Activated naive CD4-positive, alpha-beta T cell treated with anti-CD3 and anti-CD28 coated beads for 36 hours (primary cell): ENCODE measurements at regions of chr18 and their contacts with region 1.

Region 1: DNA sequence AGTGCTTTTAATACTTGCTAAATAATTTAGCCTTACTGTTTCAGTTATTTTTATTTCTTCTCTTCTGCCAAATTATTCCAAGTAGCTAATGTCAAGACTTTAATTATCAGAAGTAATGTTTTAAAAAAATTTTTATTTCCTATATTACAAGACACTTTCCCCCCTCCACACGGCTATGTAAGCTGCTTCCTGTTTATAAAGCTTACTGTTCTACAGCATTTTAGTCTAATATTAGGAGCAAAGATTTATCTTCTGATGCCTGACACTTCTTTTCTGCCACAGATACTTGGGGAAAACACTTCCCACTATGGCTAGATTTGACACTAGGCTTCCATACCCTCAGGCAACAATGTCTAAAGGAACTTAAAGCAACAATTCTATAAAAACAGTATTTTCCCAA is 62.3 kb downstream of the ROCK1 start:
- DNase-seq: no peak
- H3K4me3 Mint-ChIP-seq: no peak overlapping the region
- H3K27ac Mint-ChIP-seq: no peak overlapping the region
- H3K4me1 Mint-ChIP-seq: peaks cover 40% of the 10 kb centered on the region
- H3K27me3 Mint-ChIP-seq: no peaks in the 10 kb centered on the region

Region 2: GRCh38 chr18:21085579-21086166 is 36.4 kb after region 1 on chr18:
- CTCF ChIA-PET with region 1: no interaction called
- intact Hi-C with region 1: loop called (anchors 5 kb)
- DNase-seq: no peak
- H3K4me3 Mint-ChIP-seq: no peak overlapping the region
- H3K27ac Mint-ChIP-seq: no peak overlapping the region
- H3K4me1 Mint-ChIP-seq: peaks cover 65% of the 10 kb centered on the region
- H3K27me3 Mint-ChIP-seq: no peaks in the 10 kb centered on the region

Region 3: GRCh38 chr18:21315741-21316187 is 266.5 kb after region 1 on chr18:
- CTCF ChIA-PET with region 1: no interaction called
- intact Hi-C with region 1: no loop called
- DNase-seq: no peak
- H3K4me3 Mint-ChIP-seq: no peak overlapping the region
- H3K27ac Mint-ChIP-seq: no peak overlapping the region
- H3K4me1 Mint-ChIP-seq: no peaks in the 10 kb centered on the region
- H3K27me3 Mint-ChIP-seq: peaks cover 2% of the 10 kb centered on the region